ENCODE measurements at regions of chr2 and their contacts with region 1.

Region 1: GRCh38 chr2:27954771-27955383 is 64.3 kb downstream of the BABAM2 start:
- DNase-seq: peak; percentile 77
- H3K4me3 Mint-ChIP-seq: peak overlapping the region; percentile 42
- H3K27ac Mint-ChIP-seq: peak overlapping the region; percentile 86
- H3K4me1 Mint-ChIP-seq: peaks cover 84% of the 10 kb centered on the region
- H3K27me3 Mint-ChIP-seq: no peaks in the 10 kb centered on the region

Region 2: DNA sequence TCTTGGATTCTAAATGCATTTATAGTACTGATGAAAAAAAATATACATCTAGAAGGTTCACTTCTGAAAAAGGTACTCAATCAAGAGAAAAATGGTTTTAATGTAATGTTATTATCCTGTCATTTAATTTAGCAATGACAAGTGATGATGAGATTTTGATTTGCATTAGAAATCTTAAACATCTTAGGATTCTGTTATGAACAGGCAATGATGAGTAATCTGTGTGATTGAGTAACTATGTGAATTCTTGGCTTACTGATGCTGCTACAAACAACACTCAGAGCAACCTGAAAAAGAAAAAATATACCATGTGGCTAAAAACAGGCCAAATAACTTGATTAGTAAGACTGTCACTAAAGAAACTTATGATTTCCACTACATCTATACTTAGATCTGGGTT is 94.8 kb before region 1 on chr2:
- CTCF ChIA-PET with region 1: no interaction called
- POLR2A ChIA-PET with region 1: no interaction called
- intact Hi-C with region 1: loop called (anchors 2 kb)
- DNase-seq: no peak
- H3K4me3 Mint-ChIP-seq: no peak overlapping the region
- H3K27ac Mint-ChIP-seq: peak overlapping the region; percentile 67
- H3K4me1 Mint-ChIP-seq: peaks cover 52% of the 10 kb centered on the region
- H3K27me3 Mint-ChIP-seq: no peaks in the 10 kb centered on the region

Region 3: DNA sequence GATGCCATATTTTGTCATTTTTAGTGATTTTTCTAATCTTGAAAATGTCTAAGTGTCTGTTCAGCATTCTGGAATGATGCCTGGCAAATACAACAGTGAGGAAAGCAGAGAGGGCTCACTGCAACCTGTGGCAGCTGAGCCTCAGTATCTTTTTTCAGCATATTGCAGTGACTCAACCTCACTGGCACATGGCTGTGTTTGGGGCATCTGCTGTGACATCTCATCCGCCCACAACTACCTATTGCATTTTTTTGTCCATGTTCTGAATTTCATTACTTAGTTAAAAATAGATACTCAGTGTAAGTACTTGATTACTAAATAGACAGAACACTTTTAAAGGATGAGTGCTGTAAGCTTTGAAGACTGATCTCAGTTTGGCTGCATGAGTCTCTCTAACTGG is 53.6 kb before region 1 on chr2:
- CTCF ChIA-PET with region 1: no interaction called
- POLR2A ChIA-PET with region 1: interaction called, 6 read pairs
- intact Hi-C with region 1: loop called (anchors 1 kb)
- DNase-seq: peak; percentile 63
- H3K4me3 Mint-ChIP-seq: no peak overlapping the region
- H3K27ac Mint-ChIP-seq: peak overlapping the region; percentile 76
- H3K4me1 Mint-ChIP-seq: peaks cover 78% of the 10 kb centered on the region
- H3K27me3 Mint-ChIP-seq: no peaks in the 10 kb centered on the region

Region 4: GRCh38 chr2:27920148-27920885 is 34.6 kb before region 1 on chr2:
- CTCF ChIA-PET with region 1: no interaction called
- POLR2A ChIA-PET with region 1: no interaction called
- intact Hi-C with region 1: loop called (anchors 2 kb)
- DNase-seq: no peak
- H3K4me3 Mint-ChIP-seq: no peak overlapping the region
- H3K27ac Mint-ChIP-seq: peak overlapping the region; percentile 66
- H3K4me1 Mint-ChIP-seq: peaks cover 20% of the 10 kb centered on the region
- H3K27me3 Mint-ChIP-seq: no peaks in the 10 kb centered on the region

Region 5: GRCh38 chr2:27977608-27978312 is 22.9 kb after region 1 on chr2:
- CTCF ChIA-PET with region 1: no interaction called
- POLR2A ChIA-PET with region 1: interaction called, 5 read pairs
- intact Hi-C with region 1: loop called (anchors 1 kb)
- DNase-seq: peak; percentile 75
- H3K4me3 Mint-ChIP-seq: peak overlapping the region; percentile 30
- H3K27ac Mint-ChIP-seq: peak overlapping the region; percentile 87
- H3K4me1 Mint-ChIP-seq: peaks cover 43% of the 10 kb centered on the region
- H3K27me3 Mint-ChIP-seq: no peaks in the 10 kb centered on the region

Region 6: GRCh38 chr2:28030600-28030999 is 75.7 kb after region 1 on chr2:
- CTCF ChIA-PET with region 1: interaction called, 3 read pairs
- POLR2A ChIA-PET with region 1: no interaction called
- intact Hi-C with region 1: loop called (anchors 2 kb)
- DNase-seq: no peak
- H3K4me3 Mint-ChIP-seq: no peak overlapping the region
- H3K27ac Mint-ChIP-seq: no peak overlapping the region
- H3K4me1 Mint-ChIP-seq: peaks cover 27% of the 10 kb centered on the region
- H3K27me3 Mint-ChIP-seq: no peaks in the 10 kb centered on the region

Region 7: DNA sequence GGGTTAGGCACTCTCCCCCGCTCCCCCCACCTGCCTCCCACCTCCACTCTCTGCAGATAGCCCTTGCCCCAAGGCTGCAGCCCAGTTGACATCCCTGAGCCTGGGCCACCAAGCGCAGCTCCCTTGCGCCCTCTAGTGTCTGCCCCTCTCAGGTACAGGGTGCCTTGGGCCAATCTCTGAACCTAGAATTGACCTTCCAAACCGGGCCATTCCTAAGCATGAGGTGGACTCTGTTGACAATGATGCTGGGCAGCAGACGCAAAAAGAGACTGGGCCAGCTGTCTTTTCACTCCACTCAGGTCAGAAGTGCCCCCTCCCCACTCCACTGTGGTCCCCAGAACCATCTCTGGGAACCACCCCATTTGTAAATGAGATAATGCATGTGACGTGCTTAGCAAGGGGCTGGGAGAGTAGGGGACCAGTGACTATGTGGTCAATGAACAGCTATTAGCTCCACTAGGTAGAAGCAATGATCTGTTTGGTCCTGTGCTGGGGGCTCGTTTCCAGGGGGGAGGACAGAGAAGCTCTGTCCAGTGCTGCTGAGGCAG is 497.7 kb after region 1 on chr2:
- CTCF ChIA-PET with region 1: no interaction called
- POLR2A ChIA-PET with region 1: no interaction called
- intact Hi-C with region 1: loop called (anchors 2 kb)
- DNase-seq: peak; percentile 89
- H3K4me3 Mint-ChIP-seq: no peak overlapping the region
- H3K27ac Mint-ChIP-seq: peak overlapping the region; percentile 59
- H3K4me1 Mint-ChIP-seq: peaks cover 45% of the 10 kb centered on the region
- H3K27me3 Mint-ChIP-seq: no peaks in the 10 kb centered on the region

Measured in activated CD4-positive, alpha-beta memory T cell treated with anti-CD3 and anti-CD28 coated beads for 36 hours (primary cell).